Endothelial cell of umbilical vein (primary cell): ENCODE measurements at regions of chr9 and their contacts with region 1.

Region 1: DNA sequence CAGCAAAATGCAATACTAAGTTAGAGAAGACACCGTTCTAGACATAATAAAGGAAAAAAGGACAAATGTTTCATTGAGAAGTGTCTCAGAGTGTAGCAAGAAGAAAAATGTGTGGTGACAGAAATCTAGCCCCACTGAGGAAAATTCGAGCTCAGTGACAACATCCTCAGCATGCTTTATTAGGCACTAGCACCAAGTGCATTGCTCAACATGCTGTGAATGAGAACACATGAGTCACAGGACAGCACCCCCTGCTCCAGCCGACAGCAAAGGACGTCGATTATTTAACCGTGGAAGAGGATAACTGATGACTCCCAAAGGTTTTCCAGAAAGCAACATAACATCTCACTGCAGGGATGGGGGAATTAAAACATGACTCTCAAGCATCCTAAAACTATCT is 182.7 kb downstream of the GNAQ start:
- DNase-seq: peak; percentile 80
- H3K4me3 ChIP-seq: no peak overlapping the region
- H3K27ac ChIP-seq: peak overlapping the region; percentile 75
- H3K4me1 ChIP-seq: peaks cover 85% of the 10 kb centered on the region
- H3K27me3 ChIP-seq: no peaks in the 10 kb centered on the region
- CTCF ChIP-seq: no peak
- POLR2A ChIP-seq: no peak

Region 2: GRCh38 chr9:77514886-77515711 is 333.8 kb before region 1 on chr9:
- CTCF ChIA-PET with region 1: no interaction called
- POLR2A ChIA-PET with region 1: no interaction called
- dilution Hi-C with region 1: no loop called
- intact Hi-C with region 1: loop called (anchors 2 kb)
- DNase-seq: peak; percentile 94
- H3K4me3 ChIP-seq: no peak overlapping the region
- H3K27ac ChIP-seq: peak overlapping the region; percentile 82
- H3K4me1 ChIP-seq: peaks cover 31% of the 10 kb centered on the region
- H3K27me3 ChIP-seq: no peaks in the 10 kb centered on the region
- CTCF ChIP-seq: no peak
- POLR2A ChIP-seq: peak; percentile 57

Region 3: DNA sequence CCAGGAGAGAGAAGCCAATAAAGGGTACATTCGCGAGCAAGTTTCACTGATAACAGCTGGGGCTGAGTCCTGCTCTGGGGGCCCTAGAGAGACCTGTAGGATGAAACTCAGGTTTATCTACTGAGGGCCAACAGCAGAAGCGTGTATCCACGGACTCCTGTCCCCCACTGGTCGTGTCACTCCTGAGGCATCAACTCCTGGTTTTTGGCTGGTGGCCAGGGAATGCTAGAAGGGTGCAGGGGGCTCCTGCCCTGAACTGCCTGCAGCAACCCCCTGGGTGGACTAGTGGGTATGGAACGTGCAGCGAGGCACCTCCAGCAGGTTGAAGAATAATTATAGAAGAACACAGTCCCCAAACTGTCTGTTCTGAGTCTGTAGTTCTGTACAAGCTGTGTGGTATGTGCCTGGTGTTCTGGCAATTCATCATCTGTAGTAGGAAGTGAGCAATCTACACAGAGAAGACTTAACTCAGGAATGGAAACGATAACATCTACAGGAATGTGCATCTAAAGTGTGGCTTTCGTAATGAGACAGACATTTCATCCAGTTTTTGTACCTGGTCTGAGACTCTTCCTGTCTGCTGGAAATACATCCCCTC is 136.3 kb before region 1 on chr9:
- CTCF ChIA-PET with region 1: interaction called, 3 read pairs
- POLR2A ChIA-PET with region 1: no interaction called
- dilution Hi-C with region 1: no loop called
- intact Hi-C with region 1: loop called (anchors 2 kb)
- DNase-seq: peak; percentile 81
- H3K4me3 ChIP-seq: peak overlapping the region in 1 of 3 experiments; percentile 19
- H3K27ac ChIP-seq: peak overlapping the region; percentile 97
- H3K4me1 ChIP-seq: peaks cover 69% of the 10 kb centered on the region
- H3K27me3 ChIP-seq: no peaks in the 10 kb centered on the region
- CTCF ChIP-seq: no peak
- POLR2A ChIP-seq: no peak

Region 4: DNA sequence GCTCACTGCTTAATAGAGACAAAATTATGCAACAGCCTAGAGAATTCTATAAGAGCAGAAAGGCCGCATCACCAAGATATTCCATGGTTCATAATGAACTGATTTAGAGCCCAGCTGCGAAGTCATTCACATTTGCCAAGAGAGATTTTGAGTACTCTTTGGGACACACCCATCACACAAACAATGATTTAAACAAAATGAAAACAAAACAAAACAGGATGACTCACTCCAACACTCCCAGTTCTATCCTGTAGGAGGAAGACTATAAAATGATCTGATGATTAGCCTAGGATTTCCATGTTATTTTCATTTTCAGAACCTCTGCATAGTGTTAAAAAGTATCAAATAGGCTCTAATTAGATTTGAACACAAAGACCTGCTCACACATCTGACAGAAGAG is 55.0 kb before region 1 on chr9:
- CTCF ChIA-PET with region 1: no interaction called
- POLR2A ChIA-PET with region 1: no interaction called
- dilution Hi-C with region 1: no loop called
- intact Hi-C with region 1: loop called (anchors 5 kb)
- DNase-seq: peak; percentile 74
- H3K4me3 ChIP-seq: no peak overlapping the region
- H3K27ac ChIP-seq: peak overlapping the region; percentile 39
- H3K4me1 ChIP-seq: peaks cover 12% of the 10 kb centered on the region
- H3K27me3 ChIP-seq: no peaks in the 10 kb centered on the region
- CTCF ChIP-seq: no peak
- POLR2A ChIP-seq: no peak

Region 5: GRCh38 chr9:77960356-77961153 is 111.7 kb after region 1 on chr9:
- CTCF ChIA-PET with region 1: no interaction called
- POLR2A ChIA-PET with region 1: no interaction called
- dilution Hi-C with region 1: no loop called
- intact Hi-C with region 1: loop called (anchors 5 kb)
- DNase-seq: no peak
- H3K4me3 ChIP-seq: no peak overlapping the region
- H3K27ac ChIP-seq: no peak overlapping the region
- H3K4me1 ChIP-seq: peaks cover 38% of the 10 kb centered on the region
- H3K27me3 ChIP-seq: no peaks in the 10 kb centered on the region
- CTCF ChIP-seq: no peak
- POLR2A ChIP-seq: no peak

Region 6: GRCh38 chr9:78213712-78214111 is 364.8 kb after region 1 on chr9:
- CTCF ChIA-PET with region 1: no interaction called
- POLR2A ChIA-PET with region 1: no interaction called
- dilution Hi-C with region 1: no loop called
- intact Hi-C with region 1: loop called (anchors 5 kb)
- DNase-seq: peak; percentile 77
- H3K4me3 ChIP-seq: no peak overlapping the region
- H3K27ac ChIP-seq: no peak overlapping the region
- H3K4me1 ChIP-seq: peaks cover 2% of the 10 kb centered on the region
- H3K27me3 ChIP-seq: no peaks in the 10 kb centered on the region
- CTCF ChIP-seq: peak; percentile 17 to 46
- POLR2A ChIP-seq: no peak